ENCODE measurements at regions of chr13 and their contacts with region 1.

Region 1: DNA sequence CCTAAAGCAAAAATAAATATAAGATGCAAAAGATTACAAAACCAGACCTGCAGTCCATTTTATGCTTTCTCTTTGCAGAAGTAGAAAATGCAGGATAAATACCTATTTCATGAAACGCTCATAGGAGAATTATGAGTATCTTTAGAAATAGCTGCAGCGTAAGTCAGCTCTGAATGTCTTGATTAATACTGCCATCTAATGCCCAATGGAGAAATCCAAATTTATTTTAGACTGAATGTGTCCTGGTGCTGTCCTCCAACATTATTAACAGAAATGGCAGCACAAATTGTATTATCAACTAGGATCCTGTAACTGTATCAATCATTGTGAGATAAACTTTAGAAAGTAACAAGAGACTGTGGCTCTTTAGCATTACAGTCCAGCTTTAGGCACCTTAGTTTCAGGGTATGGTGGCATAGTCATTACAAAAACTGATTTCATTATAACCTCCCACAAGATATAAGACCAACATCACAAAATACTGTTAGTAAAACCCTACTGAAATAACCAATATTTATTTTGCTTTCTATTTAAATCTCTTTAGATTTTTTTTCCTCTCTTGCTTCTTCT is 162.1 kb upstream of the MIR17HG start:
- DNase-seq: peak; percentile 0
- ATAC-seq: no peak
- H3K4me3 ChIP-seq: no peak overlapping the region
- H3K27ac ChIP-seq: no peak overlapping the region
- H3K4me1 ChIP-seq: no peaks in the 10 kb centered on the region
- H3K27me3 ChIP-seq: no peaks in the 10 kb centered on the region
- CTCF ChIP-seq: no peak
- POLR2A ChIP-seq: no peak
- RAD21 ChIP-seq: peak; percentile 14; the same call in 1 of the 2 replicates

Region 2: DNA sequence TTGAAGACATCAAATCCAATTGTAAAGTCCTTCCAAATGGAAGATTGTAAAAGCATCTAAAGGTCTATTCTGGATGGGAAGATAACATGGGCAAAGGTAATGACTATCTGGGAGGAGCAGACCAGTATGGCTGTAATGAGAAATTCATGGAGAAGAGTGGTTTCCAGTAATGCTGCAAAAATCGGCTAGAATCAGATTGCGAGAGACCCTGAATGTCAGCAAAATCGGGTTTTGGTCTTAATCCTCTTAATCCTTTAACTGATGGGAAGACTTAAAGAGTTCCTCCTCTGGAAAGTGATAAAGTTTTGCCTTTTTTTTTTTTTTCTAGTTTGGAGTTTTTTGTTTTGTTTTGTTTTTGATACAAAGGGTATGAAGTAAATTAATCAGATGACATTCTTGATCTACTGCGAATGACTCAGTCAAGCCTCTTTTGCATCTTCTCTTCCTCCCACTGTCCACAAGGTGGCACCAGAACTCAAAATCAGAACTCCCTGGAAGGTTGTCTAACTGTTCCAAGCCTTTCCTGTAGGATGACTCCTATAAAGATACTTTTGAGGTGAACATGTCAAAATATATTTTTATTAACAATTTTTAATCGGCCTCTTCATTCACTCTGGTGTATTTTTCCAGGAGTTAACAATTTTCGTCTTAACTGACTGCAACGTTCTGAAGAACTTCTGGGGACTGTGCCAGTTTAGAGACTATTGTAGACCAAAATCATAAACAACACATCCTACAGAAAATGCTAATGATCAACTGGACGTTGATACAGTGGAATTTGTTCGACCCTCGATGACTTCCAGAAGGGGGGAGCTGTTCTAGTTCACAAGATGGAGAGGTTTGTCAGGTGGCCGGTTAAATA is 51.2 kb before region 1 on chr13:
- CTCF ChIA-PET with region 1: no interaction called
- POLR2A ChIA-PET with region 1: no interaction called
- dilution Hi-C with region 1: no loop called
- in situ Hi-C with region 1: no loop called
- intact Hi-C with region 1: loop called (anchors 2 kb)
- DNase-seq: peak; percentile 54
- ATAC-seq: peak; percentile 59
- H3K4me3 ChIP-seq: no peak overlapping the region
- H3K27ac ChIP-seq: no peak overlapping the region
- H3K4me1 ChIP-seq: no peaks in the 10 kb centered on the region
- H3K27me3 ChIP-seq: no peaks in the 10 kb centered on the region
- CTCF ChIP-seq: peak; percentile 69
- POLR2A ChIP-seq: no peak
- RAD21 ChIP-seq: peak; percentile 57

Region 3: DNA sequence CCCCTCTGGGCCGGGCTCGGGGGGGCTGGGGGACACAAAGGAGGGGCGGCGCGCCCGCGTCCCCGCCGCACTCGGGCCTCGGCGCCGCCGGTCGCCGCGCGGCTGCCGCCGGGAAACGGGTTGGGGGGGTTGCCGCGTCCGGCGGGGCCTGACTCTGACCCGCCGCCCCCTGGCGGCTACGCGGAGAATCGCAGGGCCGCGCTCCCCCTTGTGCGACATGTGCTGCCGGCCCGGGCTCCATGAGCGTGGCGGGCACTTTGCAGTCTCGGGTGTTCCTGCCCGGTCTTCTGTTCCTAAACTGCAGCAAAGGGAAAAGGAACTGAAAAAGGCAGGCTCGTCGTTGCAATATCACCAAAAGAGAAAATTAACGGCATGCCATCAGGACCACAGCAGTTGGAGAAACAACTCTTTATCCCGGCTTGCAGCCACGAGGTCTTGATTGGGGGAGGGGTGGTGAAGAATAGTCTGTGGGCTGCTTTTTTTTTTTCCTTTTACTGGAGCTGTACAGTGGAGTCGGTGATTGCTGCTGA is 163.6 kb after region 1 on chr13:
- CTCF ChIA-PET with region 1: no interaction called
- POLR2A ChIA-PET with region 1: no interaction called
- dilution Hi-C with region 1: no loop called
- in situ Hi-C with region 1: no loop called
- intact Hi-C with region 1: no loop called
- DNase-seq: peak; percentile 79
- ATAC-seq: peak; percentile 80
- H3K4me3 ChIP-seq: peak overlapping the region; percentile 73
- H3K27ac ChIP-seq: peak overlapping the region; percentile 59
- H3K4me1 ChIP-seq: peaks cover 3% of the 10 kb centered on the region
- H3K27me3 ChIP-seq: peaks cover 8% of the 10 kb centered on the region; the same call in 1 of the 2 replicates
- CTCF ChIP-seq: peak; percentile 90
- POLR2A ChIP-seq: no peak
- RAD21 ChIP-seq: 0 out of 2 replicates have a peak, but pooled peaks have one; percentile 9

Measured in IMR-90 (cell line).